ENCODE measurements at regions of chr4 and their contacts with region 1.

Region 1: GRCh38 chr4:10164877-10165283 is 48.3 kb upstream of the WDR1 start:
- DNase-seq: peak; percentile 15 to 77
- H3K4me3 ChIP-seq: no peak overlapping the region
- H3K27ac ChIP-seq: no peak overlapping the region
- H3K4me1 ChIP-seq: no peaks in the 10 kb centered on the region
- H3K27me3 ChIP-seq: no peaks in the 10 kb centered on the region; a peak in 2 of 7 replicates
- CTCF ChIP-seq: peak; percentile 62 to 82 (median 66)
- EP300 ChIP-seq: no peak
- POLR2A ChIP-seq: no peak
- RAD21 ChIP-seq: peak; percentile 86 to 89

Region 2: DNA sequence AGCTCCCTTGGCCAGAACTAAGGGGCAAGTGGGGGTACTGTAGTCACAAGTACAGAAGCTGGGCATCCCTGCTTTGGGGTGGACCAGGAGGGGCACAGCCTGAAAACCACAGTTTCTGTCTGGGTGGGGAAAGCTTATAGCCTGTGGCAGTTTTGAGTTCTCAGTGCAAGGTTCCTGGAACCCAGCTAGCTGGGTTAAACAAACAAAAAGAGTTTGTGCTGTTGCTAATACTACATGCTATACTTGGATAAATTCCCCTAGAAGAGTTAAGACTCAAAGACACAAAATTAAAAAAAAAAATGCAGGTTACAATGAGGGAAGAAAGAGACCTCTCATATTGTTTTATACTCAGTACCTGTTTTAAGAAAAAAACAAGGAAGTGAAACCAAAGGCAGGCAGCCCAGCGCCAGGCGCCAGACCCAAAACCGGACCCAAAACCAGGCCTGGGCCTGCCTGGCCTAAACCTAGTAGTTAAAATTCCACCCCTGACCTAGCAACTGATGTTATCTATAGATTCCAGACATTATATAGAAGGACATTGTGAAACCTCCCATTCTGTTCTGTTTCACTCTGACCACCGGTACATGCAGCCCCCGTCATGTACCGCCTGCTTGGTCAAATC is 194.4 kb before region 1 on chr4:
- CTCF ChIA-PET with region 1: no interaction called
- POLR2A ChIA-PET with region 1: no interaction called
- DNase-seq: no peak
- H3K4me3 ChIP-seq: no peak overlapping the region
- H3K27ac ChIP-seq: no peak overlapping the region
- H3K4me1 ChIP-seq: no peaks in the 10 kb centered on the region
- H3K27me3 ChIP-seq: no peaks in the 10 kb centered on the region
- CTCF ChIP-seq: no peak
- EP300 ChIP-seq: no peak
- POLR2A ChIP-seq: no peak
- RAD21 ChIP-seq: no peak

Region 3: GRCh38 chr4:10018818-10019461 is 145.9 kb before region 1 on chr4:
- CTCF ChIA-PET with region 1: no interaction called
- POLR2A ChIA-PET with region 1: no interaction called
- DNase-seq: peak; percentile 79 to 99
- H3K4me3 ChIP-seq: peak overlapping the region; percentile 25 to 61 (median 48); a peak in 7 of 8 replicates
- H3K27ac ChIP-seq: peak overlapping the region; percentile 51; the same call in 1 of the 2 replicates
- H3K4me1 ChIP-seq: peaks cover 0 to 12% (median 4%) of the 10 kb centered on the region in 4 experiments; a peak in 5 of 7 replicates
- H3K27me3 ChIP-seq: peaks cover 0 to 12% (median 6%) of the 10 kb centered on the region in 4 experiments; a peak in 4 of 7 replicates
- CTCF ChIP-seq: peak in 2 of 3 experiments; percentile 96 to 100; a peak in 3 of 4 replicates
- EP300 ChIP-seq: no peak
- POLR2A ChIP-seq: no peak; a peak in 1 of 3 replicates
- RAD21 ChIP-seq: peak; percentile 91 to 96

Region 4: GRCh38 chr4:10151182-10151581 is 13.7 kb before region 1 on chr4:
- CTCF ChIA-PET with region 1: interaction called, 45 read pairs
- POLR2A ChIA-PET with region 1: no interaction called
- DNase-seq: no peak
- H3K4me3 ChIP-seq: no peak overlapping the region
- H3K27ac ChIP-seq: no peak overlapping the region
- H3K4me1 ChIP-seq: no peaks in the 10 kb centered on the region
- H3K27me3 ChIP-seq: no peaks in the 10 kb centered on the region; a peak in 1 of 7 replicates
- CTCF ChIP-seq: no peak
- EP300 ChIP-seq: no peak
- POLR2A ChIP-seq: no peak
- RAD21 ChIP-seq: no peak

Region 5: DNA sequence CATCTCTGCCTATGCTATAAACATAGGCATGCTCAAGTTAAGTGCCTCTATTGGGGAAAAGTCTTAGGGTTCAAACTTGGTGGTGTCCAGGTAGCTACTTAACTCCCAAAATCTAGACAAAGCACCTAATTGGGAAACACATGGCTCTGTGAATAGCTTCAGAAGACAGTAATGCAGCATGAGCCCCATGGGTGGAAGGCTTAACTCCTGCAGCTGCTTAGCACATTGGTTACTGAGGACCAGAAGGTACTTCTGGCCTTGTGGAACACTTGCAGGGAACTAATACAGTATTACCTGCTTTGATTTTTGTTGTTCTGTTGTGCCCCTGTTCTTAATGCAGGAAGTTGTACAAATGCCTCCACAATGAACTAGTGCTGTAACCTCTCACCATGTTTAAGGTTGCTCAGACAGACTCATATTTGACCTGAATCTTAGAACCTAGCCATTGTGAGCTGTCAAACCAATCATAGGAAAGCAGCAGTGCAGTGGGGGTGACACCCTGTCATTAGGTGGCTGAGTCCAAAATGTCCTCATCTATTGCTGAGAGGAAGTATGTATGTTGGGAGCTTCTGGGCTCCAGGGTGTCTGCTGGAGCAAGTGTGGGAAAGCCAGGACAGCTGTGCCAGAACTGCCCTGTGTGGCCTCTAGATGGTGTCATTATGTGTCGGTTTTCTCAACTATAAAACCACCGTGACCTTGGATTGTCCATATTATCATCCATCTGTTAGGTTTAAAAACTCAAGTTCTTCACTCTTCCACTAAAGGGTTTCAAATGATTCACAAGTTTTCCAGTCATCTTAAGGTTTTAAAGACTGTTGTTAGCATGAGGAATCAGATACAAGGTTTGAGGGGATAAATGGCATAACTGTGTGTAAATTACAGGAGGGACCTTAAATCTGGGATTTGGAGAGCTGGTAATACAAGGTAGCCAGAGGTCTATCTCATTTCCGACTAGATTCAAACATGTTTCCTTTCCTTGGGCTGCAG is 21.6 kb after region 1 on chr4:
- CTCF ChIA-PET with region 1: interaction called, 69 read pairs
- POLR2A ChIA-PET with region 1: no interaction called
- DNase-seq: no peak
- H3K4me3 ChIP-seq: no peak overlapping the region
- H3K27ac ChIP-seq: no peak overlapping the region
- H3K4me1 ChIP-seq: no peaks in the 10 kb centered on the region
- H3K27me3 ChIP-seq: no peaks in the 10 kb centered on the region
- CTCF ChIP-seq: peak in 2 of 3 experiments; percentile 15 to 31; a peak in 2 of 4 replicates
- EP300 ChIP-seq: no peak
- POLR2A ChIP-seq: no peak
- RAD21 ChIP-seq: peak; percentile 24 to 42; a peak in 2 of 4 replicates

Region 6: GRCh38 chr4:10526429-10527222 is 361.7 kb after region 1 on chr4:
- CTCF ChIA-PET with region 1: interaction called, 25 read pairs
- POLR2A ChIA-PET with region 1: no interaction called
- DNase-seq: no peak
- H3K4me3 ChIP-seq: no peak overlapping the region
- H3K27ac ChIP-seq: no peak overlapping the region
- H3K4me1 ChIP-seq: no peaks in the 10 kb centered on the region
- H3K27me3 ChIP-seq: no peaks in the 10 kb centered on the region; a peak in 1 of 7 replicates
- CTCF ChIP-seq: peak; percentile 58 to 66 (median 61)
- EP300 ChIP-seq: no peak
- POLR2A ChIP-seq: no peak
- RAD21 ChIP-seq: peak; percentile 74 to 83

Measured in H1 (cell line).